Caco-2 (cell line): ENCODE measurements at regions of chr7 and their contacts with region 1.

Region 1: GRCh38 chr7:28853834-28854749 is 104.0 kb downstream of the TRIL start:
- DNase-seq: peak; percentile 79 to 94
- H3K4me3 ChIP-seq: peak overlapping the region; percentile 46
- H3K4me3 Mint-ChIP-seq: peak overlapping the region; percentile 78
- H3K27ac Mint-ChIP-seq: peak overlapping the region; percentile 34
- H3K4me1 ChIP-seq: peaks cover 14% of the 10 kb centered on the region; the same call in 1 of the 2 replicates
- H3K4me1 Mint-ChIP-seq: peaks cover 7% of the 10 kb centered on the region
- H3K27me3 ChIP-seq: peaks cover 1% of the 10 kb centered on the region; the same call in 1 of the 2 replicates
- H3K27me3 Mint-ChIP-seq: peaks cover 15% of the 10 kb centered on the region
- CTCF ChIP-seq: peak; percentile 91 to 95

Region 2: DNA sequence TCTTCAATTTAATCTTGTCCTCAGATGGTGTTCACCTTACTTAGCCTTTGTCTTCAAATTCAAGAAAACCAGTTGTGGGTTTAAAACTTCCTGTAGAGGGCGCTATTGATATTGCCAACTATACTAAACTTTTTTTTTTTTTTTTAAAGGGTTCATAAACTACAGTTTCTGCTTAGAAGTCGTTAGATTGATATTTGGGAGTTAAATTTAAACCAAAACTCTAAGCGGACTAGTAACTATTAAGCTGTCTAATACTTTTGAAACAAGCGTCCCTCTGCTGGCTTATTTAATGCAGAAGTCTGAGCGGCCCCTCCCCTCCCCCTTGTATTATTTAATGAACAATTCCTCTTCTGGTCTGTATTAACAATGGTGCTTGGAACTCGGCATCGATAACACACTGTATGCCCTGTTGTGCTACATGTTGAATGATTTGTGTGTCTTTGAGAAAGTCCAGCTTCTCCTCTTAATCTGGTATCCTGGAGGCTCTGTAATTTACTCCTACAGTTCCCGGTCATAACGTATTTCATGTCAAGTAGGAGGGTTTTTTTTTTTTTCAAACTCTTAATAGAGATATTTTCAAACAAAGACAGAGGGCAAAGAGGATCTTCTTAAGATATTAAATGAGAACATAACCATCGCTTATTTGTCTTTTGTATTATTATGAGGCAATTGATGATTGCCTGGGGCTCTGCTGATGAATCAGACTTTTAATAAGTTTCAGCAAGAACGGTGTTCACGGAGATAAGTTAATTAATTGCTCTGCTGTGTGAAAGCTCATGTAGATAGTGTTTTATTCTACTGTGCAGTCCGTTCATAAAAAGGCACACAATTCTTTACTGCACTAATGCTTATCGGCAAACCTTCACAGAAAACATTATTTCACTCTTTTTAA is 464.3 kb before region 1 on chr7:
- CTCF ChIA-PET with region 1: no interaction called
- POLR2A ChIA-PET with region 1: no interaction called
- intact Hi-C with region 1: loop called (anchors 1 kb)
- DNase-seq: peak in 1 of 2 experiments; percentile 50
- H3K4me3 ChIP-seq: no peak overlapping the region
- H3K4me3 Mint-ChIP-seq: peak overlapping the region; percentile 46
- H3K27ac Mint-ChIP-seq: no peak overlapping the region
- H3K4me1 ChIP-seq: no peaks in the 10 kb centered on the region; the same call in 1 of the 2 replicates
- H3K4me1 Mint-ChIP-seq: no peaks in the 10 kb centered on the region
- H3K27me3 ChIP-seq: no peaks in the 10 kb centered on the region
- H3K27me3 Mint-ChIP-seq: peaks cover 7% of the 10 kb centered on the region
- CTCF ChIP-seq: peak; percentile 67 to 78

Region 3: DNA sequence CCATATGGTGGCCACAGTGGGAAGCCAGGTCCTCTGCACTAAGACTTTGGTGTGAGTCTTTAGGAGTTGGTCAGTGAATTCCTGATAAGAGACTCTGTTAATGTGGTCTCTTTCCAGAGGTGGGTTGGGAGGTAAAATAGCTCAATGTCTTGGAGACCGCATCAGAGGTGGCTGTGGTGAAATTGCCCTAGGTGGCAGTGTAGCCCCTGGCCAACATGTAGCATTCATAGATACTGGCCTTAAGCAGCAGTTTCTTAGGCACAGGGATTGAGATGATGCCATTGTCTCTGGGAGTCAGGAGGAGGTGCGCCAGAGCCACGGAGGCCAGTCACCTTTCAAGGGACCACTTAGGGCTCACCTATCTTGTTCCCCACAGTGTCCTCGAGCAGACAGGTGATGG is 239.0 kb before region 1 on chr7:
- CTCF ChIA-PET with region 1: no interaction called
- POLR2A ChIA-PET with region 1: no interaction called
- intact Hi-C with region 1: loop called (anchors 1 kb)
- DNase-seq: no peak
- H3K4me3 ChIP-seq: no peak overlapping the region
- H3K4me3 Mint-ChIP-seq: no peak overlapping the region
- H3K27ac Mint-ChIP-seq: no peak overlapping the region
- H3K4me1 ChIP-seq: peaks cover 22% of the 10 kb centered on the region
- H3K4me1 Mint-ChIP-seq: peaks cover 17% of the 10 kb centered on the region
- H3K27me3 ChIP-seq: no peaks in the 10 kb centered on the region
- H3K27me3 Mint-ChIP-seq: no peaks in the 10 kb centered on the region
- CTCF ChIP-seq: peak in 1 of 2 experiments; percentile 13

Region 4: DNA sequence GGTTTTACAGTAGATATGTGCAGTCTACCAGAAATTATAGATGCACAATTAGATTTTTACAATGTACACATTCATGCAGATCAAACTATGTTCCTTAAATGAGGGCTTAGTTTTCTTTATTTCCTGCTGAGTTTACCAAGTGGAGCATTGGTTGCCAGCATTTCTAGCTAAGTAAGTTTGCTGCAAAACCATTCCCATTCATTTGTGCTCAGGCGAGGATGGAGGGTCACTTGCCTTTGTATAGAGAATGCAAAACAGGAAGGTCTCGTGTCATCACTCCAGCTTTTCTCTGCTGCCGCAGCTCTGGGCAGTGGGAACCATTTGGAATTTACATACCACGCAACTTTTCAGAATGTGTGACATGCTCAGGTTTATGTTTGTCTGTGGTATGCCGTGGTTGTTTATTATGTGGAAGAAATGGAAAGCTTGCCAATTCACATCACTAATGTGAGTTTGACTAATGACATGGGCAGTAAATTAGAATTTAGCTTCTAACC is 94.6 kb before region 1 on chr7:
- CTCF ChIA-PET with region 1: no interaction called
- POLR2A ChIA-PET with region 1: no interaction called
- intact Hi-C with region 1: no loop called
- DNase-seq: no peak
- H3K4me3 ChIP-seq: no peak overlapping the region
- H3K4me3 Mint-ChIP-seq: no peak overlapping the region
- H3K27ac Mint-ChIP-seq: no peak overlapping the region
- H3K4me1 ChIP-seq: no peaks in the 10 kb centered on the region
- H3K4me1 Mint-ChIP-seq: no peaks in the 10 kb centered on the region
- H3K27me3 ChIP-seq: no peaks in the 10 kb centered on the region; the same call in 1 of the 2 replicates
- H3K27me3 Mint-ChIP-seq: no peaks in the 10 kb centered on the region
- CTCF ChIP-seq: no peak